Adrenal gland (tissue), 19 donors: ENCODE measurements at regions of chr9 and their contacts with region 1.

Region 1: DNA sequence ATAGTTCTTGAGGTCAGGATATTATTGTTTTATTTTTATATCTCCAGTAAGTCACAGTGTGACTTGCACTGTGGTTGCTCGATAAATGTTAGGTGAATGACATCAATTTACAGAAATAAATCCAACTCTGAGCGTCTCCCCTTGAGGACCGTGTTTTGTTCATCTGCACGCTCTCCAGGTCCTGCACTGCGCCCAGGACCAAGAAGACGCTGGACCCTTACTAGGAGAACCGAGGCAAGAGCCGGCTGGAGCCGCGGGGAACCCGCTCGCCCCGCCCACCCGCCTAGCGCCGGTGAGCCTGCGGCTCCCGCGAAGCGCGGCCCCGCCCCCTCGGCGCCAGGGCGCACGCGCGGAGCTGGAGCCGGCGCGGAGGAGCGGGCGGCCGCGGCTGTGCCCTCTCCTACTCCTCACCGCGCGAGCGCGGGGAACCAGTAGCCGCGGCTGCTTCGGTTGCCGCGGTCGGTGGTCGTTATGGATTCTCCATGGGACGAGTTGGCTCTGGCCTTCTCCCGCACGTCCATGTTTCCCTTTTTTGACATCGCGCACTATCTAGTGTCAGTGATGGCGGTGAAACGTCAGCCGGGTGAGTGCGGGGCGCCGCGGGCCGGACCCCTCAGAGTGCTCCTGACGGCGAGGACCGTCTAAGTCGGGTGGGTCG is at the start of gene TMEM38B:
- DNase-seq: peak; percentile 65 to 86 (median 79)
- H3K4me3 ChIP-seq: peak within 1 kb of the TSS; percentile 22 to 90 (median 72)
- H3K27ac ChIP-seq: peak within 1 kb of the TSS in 4 of 5 donors; percentile 71 to 87 (median 86)
- H3K4me1 ChIP-seq: peaks cover 7 to 9% of the 10 kb centered on the region in 2 donors
- H3K27me3 ChIP-seq: no peaks in the 10 kb centered on the region
- CTCF ChIP-seq: no peak
- POLR2A ChIP-seq: peak; percentile 48 to 61
- total RNA-seq, gene TMEM38B: 17.9 to 86.0 (median 23.5) TPM

Region 2: GRCh38 chr9:105191508-105192121 is 502.7 kb before region 1 on chr9:
- intact Hi-C with region 1: no loop called
- DNase-seq: peak; percentile 35 to 74 (median 61)
- H3K4me3 ChIP-seq: peak overlapping the region in 1 of 4 donors; percentile 5
- H3K27ac ChIP-seq: peak overlapping the region in 4 of 5 donors; percentile 23 to 60 (median 44)
- H3K4me1 ChIP-seq: peaks cover 10 to 13% of the 10 kb centered on the region in 2 donors
- H3K27me3 ChIP-seq: no peaks in the 10 kb centered on the region
- CTCF ChIP-seq: no peak
- POLR2A ChIP-seq: peak in 1 of 2 donors; percentile 16

Region 3: DNA sequence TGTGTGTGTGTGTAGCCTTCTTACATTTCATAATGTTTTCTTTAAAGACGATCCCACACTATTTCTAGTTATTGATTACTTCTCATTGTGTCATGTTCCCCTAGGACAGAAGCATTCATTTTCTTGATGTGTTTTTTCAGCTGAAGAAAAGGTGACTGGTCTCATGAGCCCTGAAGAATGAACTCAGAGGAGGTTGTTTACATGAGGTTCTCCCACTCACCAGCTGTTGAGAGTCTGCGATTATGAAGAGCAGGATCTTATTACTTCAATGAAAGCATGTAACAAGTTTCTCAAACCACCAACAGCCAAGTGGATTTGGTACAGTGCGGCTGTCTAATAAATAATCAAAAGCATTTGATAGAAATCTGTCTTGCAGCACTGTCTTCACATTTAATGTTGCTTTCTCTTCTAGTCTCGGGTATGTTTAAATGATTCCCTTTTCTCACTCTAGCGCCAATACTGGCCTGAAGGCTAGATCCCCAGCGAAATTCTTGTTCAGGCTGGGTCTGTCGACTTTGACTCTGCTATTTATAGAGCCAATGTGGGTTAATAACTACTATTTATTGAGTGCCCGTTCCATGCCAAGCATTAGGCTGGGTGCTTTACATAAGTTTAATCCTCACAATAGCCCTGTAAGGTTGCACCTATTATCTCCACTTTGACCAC is 256.0 kb before region 1 on chr9:
- intact Hi-C with region 1: loop called in 1 of 2 experiments (anchors 10 kb)
- DNase-seq: no peak
- H3K4me3 ChIP-seq: no peak overlapping the region
- H3K27ac ChIP-seq: no peak overlapping the region
- H3K4me1 ChIP-seq: peaks cover 14 to 15% of the 10 kb centered on the region in 2 donors
- H3K27me3 ChIP-seq: no peaks in the 10 kb centered on the region
- CTCF ChIP-seq: no peak
- POLR2A ChIP-seq: no peak